HEK293 (cell line): ENCODE measurements at regions of chr2 and their contacts with region 1.

Region 1: GRCh38 chr2:232438951-232439757 is 16.8 kb upstream of the ALPI start:
- H3K4me3 ChIP-seq: no peak overlapping the region
- H3K27ac ChIP-seq: no peak overlapping the region
- H3K4me1 ChIP-seq: no peaks in the 10 kb centered on the region
- CTCF ChIP-seq: peak; percentile 29; the same call in 1 of the 2 replicates

Region 2: GRCh38 chr2:231908584-231908983 is 530.6 kb before region 1 on chr2:
- CTCF ChIA-PET with region 1: interaction called, 15 read pairs
- POLR2A ChIA-PET with region 1: no interaction called
- H3K4me3 ChIP-seq: no peak overlapping the region
- H3K27ac ChIP-seq: no peak overlapping the region
- H3K4me1 ChIP-seq: no peaks in the 10 kb centered on the region
- CTCF ChIP-seq: no peak

Region 3: GRCh38 chr2:232240906-232241305 is 198.2 kb before region 1 on chr2:
- CTCF ChIA-PET with region 1: no interaction called
- POLR2A ChIA-PET with region 1: no interaction called
- H3K4me3 ChIP-seq: no peak overlapping the region
- H3K27ac ChIP-seq: no peak overlapping the region
- H3K4me1 ChIP-seq: no peaks in the 10 kb centered on the region
- CTCF ChIP-seq: no peak

Region 4: GRCh38 chr2:232333361-232334270 is 105.5 kb before region 1 on chr2:
- CTCF ChIA-PET with region 1: interaction called, 20 read pairs
- POLR2A ChIA-PET with region 1: no interaction called
- H3K4me3 ChIP-seq: no peak overlapping the region
- H3K27ac ChIP-seq: no peak overlapping the region
- H3K4me1 ChIP-seq: no peaks in the 10 kb centered on the region
- CTCF ChIP-seq: no peak

Region 5: DNA sequence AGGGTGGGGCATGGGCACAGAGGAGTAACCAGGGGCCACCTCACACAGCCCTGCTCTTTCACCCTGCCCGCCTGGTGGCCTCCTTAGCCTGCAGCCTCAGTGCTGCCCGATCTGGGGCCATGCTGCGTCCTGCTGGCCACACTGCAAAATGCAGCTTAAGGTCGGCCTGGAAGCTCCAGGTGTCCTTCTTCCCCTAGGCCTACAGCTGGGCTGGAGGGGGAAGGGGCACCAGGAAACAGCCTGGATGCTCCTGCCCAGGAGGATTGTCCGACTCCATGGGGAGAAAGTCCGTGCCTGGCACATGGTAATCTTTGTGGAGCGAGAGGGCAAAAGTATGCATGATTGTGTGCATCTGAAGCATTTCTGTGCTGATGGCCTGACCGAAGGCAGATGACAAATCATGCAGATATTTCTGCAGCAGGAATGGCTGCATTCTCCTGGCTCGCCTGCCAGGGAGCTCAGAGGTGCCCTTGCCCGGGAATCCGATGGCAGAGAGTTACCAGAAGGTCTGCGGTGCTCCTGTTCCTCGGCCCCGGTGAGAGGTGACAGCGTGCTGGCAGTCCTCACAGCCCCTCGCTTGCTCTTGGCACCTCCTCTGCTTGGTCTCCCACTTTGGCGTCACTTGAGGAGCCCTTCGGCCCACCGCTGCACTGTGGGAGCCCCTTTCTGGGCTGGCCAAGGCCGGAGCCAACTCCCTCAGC is 73.4 kb before region 1 on chr2:
- CTCF ChIA-PET with region 1: interaction called, 49 read pairs
- POLR2A ChIA-PET with region 1: no interaction called
- H3K4me3 ChIP-seq: no peak overlapping the region
- H3K27ac ChIP-seq: no peak overlapping the region
- H3K4me1 ChIP-seq: no peaks in the 10 kb centered on the region
- CTCF ChIP-seq: peak; percentile 77

Region 6: GRCh38 chr2:232420463-232421188 is 18.5 kb before region 1 on chr2:
- CTCF ChIA-PET with region 1: interaction called, 10 read pairs
- POLR2A ChIA-PET with region 1: no interaction called
- H3K4me3 ChIP-seq: peak overlapping the region; percentile 49
- H3K27ac ChIP-seq: no peak overlapping the region; the same call in 1 of the 2 replicates
- H3K4me1 ChIP-seq: no peaks in the 10 kb centered on the region
- CTCF ChIP-seq: peak; percentile 50; the same call in 1 of the 2 replicates

Region 7: GRCh38 chr2:232556426-232556825 is 117.3 kb after region 1 on chr2:
- CTCF ChIA-PET with region 1: no interaction called
- POLR2A ChIA-PET with region 1: no interaction called
- H3K4me3 ChIP-seq: no peak overlapping the region
- H3K27ac ChIP-seq: no peak overlapping the region
- H3K4me1 ChIP-seq: no peaks in the 10 kb centered on the region
- CTCF ChIP-seq: no peak